H1 (cell line): ENCODE measurements at regions of chrX and their contacts with region 1.

Region 1: GRCh38 chrX:103503163-103503852 is 16.0 kb downstream of the RAB40A start:
- DNase-seq: no peak
- H3K4me3 ChIP-seq: no peak overlapping the region
- H3K27ac ChIP-seq: no peak overlapping the region
- H3K4me1 ChIP-seq: no peaks in the 10 kb centered on the region
- H3K27me3 ChIP-seq: no peaks in the 10 kb centered on the region
- CTCF ChIP-seq: 0 out of 4 replicates have a peak, but pooled peaks of 1 of the 3 experiments have one; percentile 3
- EP300 ChIP-seq: no peak
- POLR2A ChIP-seq: no peak
- RAD21 ChIP-seq: no peak

Region 2: GRCh38 chrX:103488794-103489193 is 14.5 kb before region 1 on chrX:
- CTCF ChIA-PET with region 1: interaction called, 13 read pairs
- POLR2A ChIA-PET with region 1: interaction called, 4 read pairs
- DNase-seq: no peak
- H3K4me3 ChIP-seq: no peak overlapping the region
- H3K27ac ChIP-seq: no peak overlapping the region
- H3K4me1 ChIP-seq: no peaks in the 10 kb centered on the region
- H3K27me3 ChIP-seq: no peaks in the 10 kb centered on the region
- CTCF ChIP-seq: no peak
- EP300 ChIP-seq: no peak
- POLR2A ChIP-seq: no peak
- RAD21 ChIP-seq: no peak

Region 3: DNA sequence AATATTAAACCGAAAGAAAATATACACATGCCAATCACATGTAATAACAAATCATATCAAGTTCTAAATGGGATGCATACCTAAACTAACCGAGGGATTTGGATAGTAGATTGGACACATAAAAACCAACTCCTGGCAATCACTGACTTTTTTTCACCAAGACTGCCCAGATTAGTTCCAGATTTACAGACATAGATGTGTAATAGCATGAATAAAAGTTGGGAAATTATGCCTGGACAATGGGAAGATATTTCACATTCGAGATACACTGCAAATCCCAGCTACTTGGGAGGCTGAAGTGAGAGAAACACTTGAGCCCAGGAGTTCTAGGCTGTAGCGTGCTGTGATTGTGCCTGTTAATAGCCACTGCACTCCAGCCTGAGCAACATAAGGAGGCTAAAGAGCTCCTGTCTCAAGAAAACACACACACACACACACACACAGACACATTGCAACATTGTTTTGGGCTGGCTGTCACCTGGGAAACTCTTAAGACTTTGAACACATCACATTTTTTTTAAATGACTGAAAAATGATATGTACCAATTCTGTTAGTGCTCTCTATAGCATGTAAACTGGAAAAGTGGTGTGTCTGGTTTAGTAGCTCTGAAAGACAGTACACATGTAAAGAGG is 10.3 kb after region 1 on chrX:
- CTCF ChIA-PET with region 1: no interaction called
- POLR2A ChIA-PET with region 1: no interaction called
- DNase-seq: no peak
- H3K4me3 ChIP-seq: no peak overlapping the region
- H3K27ac ChIP-seq: no peak overlapping the region
- H3K4me1 ChIP-seq: peaks cover 0 to 2% (median 0%) of the 10 kb centered on the region in 4 experiments; a peak in 3 of 7 replicates
- H3K27me3 ChIP-seq: 0 out of 7 replicates have a peak, but pooled peaks cover 0 to 1% (median 0%) of the 10 kb centered on the region in 4 experiments
- CTCF ChIP-seq: no peak
- EP300 ChIP-seq: no peak
- POLR2A ChIP-seq: no peak
- RAD21 ChIP-seq: no peak